ENCODE measurements at regions of chr4 and their contacts with region 1.

Region 1: DNA sequence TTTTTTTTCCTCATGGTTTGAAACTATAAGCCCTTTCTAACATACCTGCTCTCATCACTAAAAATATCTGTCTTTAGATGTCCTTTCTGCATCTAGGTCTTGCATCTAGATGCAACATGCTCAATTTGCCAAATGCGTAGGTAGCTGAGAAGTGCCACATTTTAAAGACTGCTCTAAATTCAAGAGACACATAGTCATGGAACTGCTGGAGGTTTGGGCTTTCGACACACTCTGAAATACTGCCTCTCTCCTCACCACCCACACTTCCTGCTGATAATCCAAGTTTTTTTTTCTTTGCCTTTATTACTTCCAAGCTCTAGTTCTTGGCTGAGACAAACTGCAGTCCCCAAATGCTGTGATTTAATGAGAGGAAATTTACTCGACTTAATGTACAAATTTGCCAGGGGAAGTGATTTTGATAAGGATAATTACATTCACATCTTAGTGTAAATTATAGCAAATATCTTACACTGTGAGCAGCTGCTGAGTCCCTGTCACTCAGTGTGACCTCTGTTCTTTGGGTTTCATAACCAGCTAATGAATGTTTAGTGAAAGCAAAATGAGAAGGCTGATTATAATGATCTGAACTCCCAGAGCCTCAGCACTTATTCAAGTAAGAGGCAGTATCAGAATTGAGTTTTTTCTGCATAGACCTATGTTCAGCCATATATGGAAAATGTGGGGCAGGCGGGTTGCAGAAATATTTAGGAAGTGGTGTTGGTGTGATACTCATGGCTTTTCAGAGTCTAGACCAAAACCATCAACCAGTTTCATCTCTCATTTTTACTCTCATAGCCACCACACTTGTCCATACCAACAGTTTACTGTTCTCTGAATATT is 31.3 kb downstream of the DRD5 start:
- DNase-seq: no peak
- H3K4me3 ChIP-seq: no peak overlapping the region
- H3K27ac ChIP-seq: no peak overlapping the region
- H3K4me1 ChIP-seq: no peaks in the 10 kb centered on the region
- H3K27me3 ChIP-seq: no peaks in the 10 kb centered on the region
- CTCF ChIP-seq: no peak

Region 2: GRCh38 chr4:9880406-9881197 is 67.9 kb after region 1 on chr4:
- intact Hi-C with region 1: loop called (anchors 10 kb)
- DNase-seq: no peak
- H3K4me3 ChIP-seq: no peak overlapping the region
- H3K27ac ChIP-seq: no peak overlapping the region
- H3K4me1 ChIP-seq: peaks cover 19% of the 10 kb centered on the region
- H3K27me3 ChIP-seq: no peaks in the 10 kb centered on the region
- CTCF ChIP-seq: no peak

Region 3: DNA sequence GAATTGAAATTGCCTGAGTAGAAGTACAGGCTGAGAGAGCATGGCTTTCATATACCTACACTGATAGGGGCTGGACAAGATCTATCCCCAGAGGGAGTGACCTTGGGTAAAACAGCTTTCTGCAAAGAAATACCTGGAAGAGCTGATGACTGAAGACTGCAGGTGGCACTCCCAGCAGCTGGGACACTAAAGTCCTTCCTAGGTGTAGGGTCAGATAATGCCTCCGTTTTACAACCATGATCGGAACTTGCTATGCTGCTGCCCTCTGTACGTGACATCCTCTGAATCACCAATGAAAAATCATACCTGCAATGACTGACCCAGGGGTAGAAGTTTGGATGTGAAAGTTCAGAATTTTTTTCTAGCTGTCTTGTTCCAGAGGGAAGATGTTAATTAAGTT is 411.1 kb after region 1 on chr4:
- intact Hi-C with region 1: no loop called
- DNase-seq: no peak
- H3K4me3 ChIP-seq: no peak overlapping the region
- H3K27ac ChIP-seq: no peak overlapping the region
- H3K4me1 ChIP-seq: no peaks in the 10 kb centered on the region
- H3K27me3 ChIP-seq: no peaks in the 10 kb centered on the region
- CTCF ChIP-seq: no peak